Naive thymus-derived CD4-positive, alpha-beta T cell (primary cell): ENCODE measurements at regions of chr4 and their contacts with region 1.

Region 1: DNA sequence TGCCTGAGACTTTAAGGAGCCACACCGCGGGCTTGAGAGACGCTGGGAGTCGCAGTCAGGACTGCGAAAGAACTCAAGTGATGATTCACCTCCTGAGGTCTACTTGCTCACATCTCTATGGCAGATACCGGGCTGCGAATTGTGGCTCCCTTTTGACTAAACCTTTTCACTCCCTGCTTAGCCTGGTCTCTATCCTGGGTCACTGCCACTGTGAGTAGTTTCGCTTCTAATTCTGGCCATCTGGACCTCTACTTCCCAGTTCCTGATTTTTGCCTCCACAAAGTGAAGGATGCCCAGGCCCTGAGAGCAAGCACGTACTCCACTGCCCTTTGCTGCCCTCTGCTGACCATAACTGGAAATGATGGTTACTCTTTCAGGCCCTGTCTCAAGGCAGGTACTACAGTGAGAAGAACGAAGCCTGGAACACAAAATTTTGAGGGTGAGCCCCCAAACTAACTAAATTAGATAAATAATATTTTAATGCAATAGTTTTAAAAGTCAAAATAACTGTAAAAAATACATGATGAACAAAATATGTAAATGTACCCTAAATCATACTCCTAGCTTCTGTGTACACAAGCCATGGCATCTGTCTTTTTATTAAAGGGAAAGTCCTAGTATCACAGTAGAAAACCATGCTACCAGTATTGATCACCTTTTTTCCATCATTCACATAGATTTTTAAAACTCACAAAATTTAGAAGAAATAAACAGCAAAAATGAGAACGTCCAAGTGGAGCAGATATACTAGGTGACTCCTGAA is 16.7 kb downstream of the MAD2L1 start:
- DNase-seq: peak; percentile 41 to 78 (median 64)
- ATAC-seq: peak; percentile 97
- H3K4me3 ChIP-seq: no peak overlapping the region
- H3K4me3 Mint-ChIP-seq: peak overlapping the region in 7 of 10 donors; percentile 22 to 84 (median 33)
- H3K27ac ChIP-seq: no peak overlapping the region
- H3K27ac Mint-ChIP-seq: peak overlapping the region in 1 of 9 donors; percentile 3
- H3K4me1 ChIP-seq: no peaks in the 10 kb centered on the region
- H3K4me1 Mint-ChIP-seq: peaks cover 0 to 5% (median 4%) of the 10 kb centered on the region in 7 donors
- H3K27me3 ChIP-seq: no peaks in the 10 kb centered on the region
- H3K27me3 Mint-ChIP-seq: no peaks in the 10 kb centered on the region

Region 2: DNA sequence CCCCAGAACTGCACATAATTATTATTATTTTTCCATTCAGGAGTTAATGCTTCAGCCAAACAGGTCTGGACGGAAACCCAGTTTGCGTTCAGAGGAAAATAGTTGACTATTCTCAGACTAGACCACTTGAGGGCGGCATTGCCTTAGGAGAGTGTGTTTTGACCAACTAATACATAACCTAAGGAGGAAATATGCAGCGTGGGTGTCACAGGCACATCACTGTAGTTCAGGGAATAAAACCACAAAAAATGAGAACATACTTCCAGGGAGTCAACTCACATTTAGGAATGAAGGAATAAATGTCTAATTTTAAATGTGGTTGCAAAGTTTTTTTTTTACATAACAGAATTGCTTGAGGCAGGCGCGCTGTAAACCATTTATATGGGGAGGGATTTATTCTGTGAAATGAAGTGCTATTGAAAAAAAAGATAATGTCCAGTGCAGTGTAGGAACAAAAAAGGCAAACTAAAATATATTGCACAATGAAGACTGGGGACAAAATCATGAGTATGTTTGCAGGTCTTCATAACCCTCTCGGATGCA is 1068.0 kb before region 1 on chr4:
- CTCF ChIA-PET with region 1: no interaction called
- POLR2A ChIA-PET with region 1: no interaction called
- intact Hi-C with region 1: loop called (anchors 1 kb)
- DNase-seq: peak in 8 of 9 donors; percentile 14 to 55 (median 38)
- ATAC-seq: peak; percentile 88
- H3K4me3 ChIP-seq: no peak overlapping the region
- H3K4me3 Mint-ChIP-seq: no peak overlapping the region
- H3K27ac ChIP-seq: no peak overlapping the region
- H3K27ac Mint-ChIP-seq: no peak overlapping the region
- H3K4me1 ChIP-seq: no peaks in the 10 kb centered on the region
- H3K4me1 Mint-ChIP-seq: peaks cover 0 to 2% (median 0%) of the 10 kb centered on the region in 7 donors
- H3K27me3 ChIP-seq: no peaks in the 10 kb centered on the region
- H3K27me3 Mint-ChIP-seq: peaks cover 0 to 18% (median 0%) of the 10 kb centered on the region in 5 donors

Region 3: GRCh38 chr4:119041951-119042560 is 1007.9 kb before region 1 on chr4:
- CTCF ChIA-PET with region 1: interaction called, 3 read pairs
- POLR2A ChIA-PET with region 1: no interaction called
- intact Hi-C with region 1: loop called (anchors 5 to 10 kb)
- DNase-seq: peak in 7 of 9 donors; percentile 30 to 72 (median 61)
- ATAC-seq: peak; percentile 94
- H3K4me3 ChIP-seq: no peak overlapping the region
- H3K4me3 Mint-ChIP-seq: peak overlapping the region in 1 of 10 donors; percentile 25
- H3K27ac ChIP-seq: no peak overlapping the region
- H3K27ac Mint-ChIP-seq: no peak overlapping the region
- H3K4me1 ChIP-seq: no peaks in the 10 kb centered on the region
- H3K4me1 Mint-ChIP-seq: peaks cover 0 to 12% (median 0%) of the 10 kb centered on the region in 7 donors
- H3K27me3 ChIP-seq: no peaks in the 10 kb centered on the region
- H3K27me3 Mint-ChIP-seq: peaks cover 0 to 3% (median 0%) of the 10 kb centered on the region in 5 donors

Region 4: GRCh38 chr4:119314356-119314755 is 735.6 kb before region 1 on chr4:
- CTCF ChIA-PET with region 1: interaction called, 3 read pairs
- POLR2A ChIA-PET with region 1: no interaction called
- intact Hi-C with region 1: loop called (anchors 1 kb)
- DNase-seq: peak in 7 of 9 donors; percentile 37 to 72 (median 61)
- ATAC-seq: peak; percentile 80
- H3K4me3 ChIP-seq: no peak overlapping the region
- H3K4me3 Mint-ChIP-seq: no peak overlapping the region
- H3K27ac ChIP-seq: no peak overlapping the region
- H3K27ac Mint-ChIP-seq: peak overlapping the region in 2 of 9 donors; percentile 1 to 17
- H3K4me1 ChIP-seq: no peaks in the 10 kb centered on the region
- H3K4me1 Mint-ChIP-seq: peaks cover 0 to 2% (median 0%) of the 10 kb centered on the region in 7 donors
- H3K27me3 ChIP-seq: no peaks in the 10 kb centered on the region
- H3K27me3 Mint-ChIP-seq: peaks cover 0 to 40% (median 8%) of the 10 kb centered on the region in 5 donors

Region 5: DNA sequence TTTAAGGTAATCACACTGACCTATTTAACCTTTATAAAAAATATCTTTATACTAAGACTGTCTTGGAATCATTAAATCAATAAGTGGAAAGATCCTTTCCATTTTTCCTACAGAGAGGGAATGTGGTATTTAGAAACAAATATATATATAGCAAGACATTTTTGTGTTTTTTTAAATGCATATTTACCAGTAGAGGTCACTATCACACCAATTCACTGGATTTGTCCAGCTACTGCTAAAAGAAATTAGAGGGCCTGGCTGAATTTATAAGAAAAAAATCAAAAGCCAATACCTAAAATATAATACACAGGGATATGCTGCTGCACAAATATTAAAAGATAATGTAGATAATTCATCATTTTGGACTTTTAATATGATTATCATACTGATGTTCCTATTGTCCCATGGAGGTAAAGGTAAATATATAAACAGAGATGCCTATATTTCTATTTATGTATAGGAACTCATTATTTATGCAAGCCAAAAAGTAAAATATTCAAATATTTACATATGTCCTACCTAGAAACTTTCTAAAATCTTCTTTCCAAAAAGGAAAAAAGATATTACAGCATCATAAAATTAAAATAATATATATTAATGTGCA is 490.8 kb before region 1 on chr4:
- CTCF ChIA-PET with region 1: no interaction called
- POLR2A ChIA-PET with region 1: no interaction called
- intact Hi-C with region 1: loop called (anchors 1 kb)
- DNase-seq: no peak
- ATAC-seq: no peak
- H3K4me3 ChIP-seq: no peak overlapping the region
- H3K4me3 Mint-ChIP-seq: no peak overlapping the region
- H3K27ac ChIP-seq: no peak overlapping the region
- H3K27ac Mint-ChIP-seq: no peak overlapping the region
- H3K4me1 ChIP-seq: no peaks in the 10 kb centered on the region
- H3K4me1 Mint-ChIP-seq: no peaks in the 10 kb centered on the region
- H3K27me3 ChIP-seq: no peaks in the 10 kb centered on the region
- H3K27me3 Mint-ChIP-seq: no peaks in the 10 kb centered on the region